Activated CD4-positive, alpha-beta T cell treated with anti-CD3 and anti-CD28 coated beads for 36 hours (primary cell): ENCODE measurements at regions of chr15 and their contacts with region 1.

Region 1: GRCh38 chr15:41116116-41116871 is at the start of gene INO80:
- DNase-seq: peak; percentile 99
- ATAC-seq: peak; percentile 85
- H3K4me3 Mint-ChIP-seq: peak within 1 kb of the TSS; percentile 80
- H3K27ac Mint-ChIP-seq: peak within 1 kb of the TSS; percentile 98
- H3K4me1 Mint-ChIP-seq: peaks cover 24% of the 10 kb centered on the region
- H3K27me3 Mint-ChIP-seq: no peaks in the 10 kb centered on the region
- total RNA-seq, gene INO80: 22.2 to 25.1 TPM

Region 2: DNA sequence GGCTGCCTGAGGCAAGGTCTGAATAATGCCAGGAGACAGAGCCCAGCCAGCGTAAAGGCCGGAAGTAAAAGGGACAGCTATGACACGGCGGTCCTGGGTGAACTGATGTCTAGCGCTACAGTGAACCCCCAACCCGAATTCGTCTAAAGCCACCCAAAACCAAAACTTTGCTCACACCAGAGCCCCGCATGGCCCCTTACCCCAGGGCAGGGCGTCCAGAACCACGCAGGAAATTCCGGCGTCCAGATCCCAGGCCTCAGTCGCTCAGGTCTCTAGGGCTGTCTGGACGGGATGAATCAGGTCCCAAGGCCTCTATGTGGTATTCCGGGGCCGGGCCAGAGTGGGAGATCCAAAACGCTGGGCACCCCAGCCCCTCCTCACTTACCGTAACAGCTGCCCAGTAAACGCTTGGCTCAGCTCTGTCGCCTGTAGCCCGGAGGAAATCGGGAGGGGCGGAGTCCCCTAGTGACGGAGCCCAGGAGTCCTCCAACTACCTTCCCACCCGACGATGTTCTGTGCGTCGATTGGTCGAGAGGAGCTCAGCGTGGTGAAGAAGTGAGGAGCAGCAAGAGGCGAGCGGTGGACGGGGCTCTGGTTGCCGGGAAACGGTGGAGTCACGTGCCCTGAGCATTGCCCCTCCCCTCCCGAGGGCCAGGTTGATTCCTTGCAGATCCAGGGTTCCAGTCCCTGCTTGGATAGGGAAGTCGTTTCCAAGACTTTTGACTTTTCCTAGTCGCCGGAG is 551.5 kb before region 1 on chr15 and contains the start of gene CCDC32:
- CTCF ChIA-PET with region 1: no interaction called
- POLR2A ChIA-PET with region 1: no interaction called
- intact Hi-C with region 1: loop called in 1 of 2 experiments (anchors 1 kb)
- DNase-seq: peak; percentile 97
- ATAC-seq: peak; percentile 97
- H3K4me3 Mint-ChIP-seq: peak within 1 kb of the TSS; percentile 96
- H3K27ac Mint-ChIP-seq: peak within 1 kb of the TSS; percentile 93
- H3K4me1 Mint-ChIP-seq: peaks cover 44% of the 10 kb centered on the region
- H3K27me3 Mint-ChIP-seq: no peaks in the 10 kb centered on the region
- total RNA-seq, gene CCDC32: 14.2 to 24.5 TPM

Region 3: GRCh38 chr15:40807028-40807887 is 309.0 kb before region 1 on chr15 and contains the starts of genes DNAJC17 and ZFYVE19:
- CTCF ChIA-PET with region 1: no interaction called
- POLR2A ChIA-PET with region 1: no interaction called
- intact Hi-C with region 1: loop called (anchors 1 kb)
- DNase-seq: peak; percentile 97
- ATAC-seq: peak; percentile 98
- H3K4me3 Mint-ChIP-seq: peak within 1 kb of the TSS; percentile 91
- H3K27ac Mint-ChIP-seq: peak within 1 kb of the TSS; percentile 96
- H3K4me1 Mint-ChIP-seq: peaks cover 19% of the 10 kb centered on the region
- H3K27me3 Mint-ChIP-seq: no peaks in the 10 kb centered on the region
- total RNA-seq, gene DNAJC17: 41.5 to 43.6 TPM
- total RNA-seq, gene ZFYVE19: 27.5 to 33.7 TPM

Region 4: GRCh38 chr15:41150279-41150678 is 34.0 kb after region 1 on chr15:
- CTCF ChIA-PET with region 1: no interaction called
- POLR2A ChIA-PET with region 1: interaction called, 5 read pairs
- intact Hi-C with region 1: loop called in 1 of 2 experiments (anchors 1 kb)
- DNase-seq: no peak
- ATAC-seq: no peak
- H3K4me3 Mint-ChIP-seq: no peak overlapping the region
- H3K27ac Mint-ChIP-seq: no peak overlapping the region
- H3K4me1 Mint-ChIP-seq: peaks cover 16% of the 10 kb centered on the region
- H3K27me3 Mint-ChIP-seq: no peaks in the 10 kb centered on the region

Region 5: GRCh38 chr15:41401904-41402267 is 285.6 kb after region 1 on chr15:
- CTCF ChIA-PET with region 1: no interaction called
- POLR2A ChIA-PET with region 1: no interaction called
- intact Hi-C with region 1: loop called in 1 of 2 experiments (anchors 1 kb)
- DNase-seq: no peak
- ATAC-seq: no peak
- H3K4me3 Mint-ChIP-seq: peak overlapping the region; percentile 94
- H3K27ac Mint-ChIP-seq: peak overlapping the region; percentile 92
- H3K4me1 Mint-ChIP-seq: peaks cover 13% of the 10 kb centered on the region
- H3K27me3 Mint-ChIP-seq: no peaks in the 10 kb centered on the region

Region 6: GRCh38 chr15:41487381-41487780 is 371.1 kb after region 1 on chr15:
- CTCF ChIA-PET with region 1: no interaction called
- POLR2A ChIA-PET with region 1: no interaction called
- intact Hi-C with region 1: no loop called
- DNase-seq: no peak
- ATAC-seq: no peak
- H3K4me3 Mint-ChIP-seq: no peak overlapping the region
- H3K27ac Mint-ChIP-seq: no peak overlapping the region
- H3K4me1 Mint-ChIP-seq: peaks cover 48% of the 10 kb centered on the region
- H3K27me3 Mint-ChIP-seq: peaks cover 17% of the 10 kb centered on the region

Region 7: DNA sequence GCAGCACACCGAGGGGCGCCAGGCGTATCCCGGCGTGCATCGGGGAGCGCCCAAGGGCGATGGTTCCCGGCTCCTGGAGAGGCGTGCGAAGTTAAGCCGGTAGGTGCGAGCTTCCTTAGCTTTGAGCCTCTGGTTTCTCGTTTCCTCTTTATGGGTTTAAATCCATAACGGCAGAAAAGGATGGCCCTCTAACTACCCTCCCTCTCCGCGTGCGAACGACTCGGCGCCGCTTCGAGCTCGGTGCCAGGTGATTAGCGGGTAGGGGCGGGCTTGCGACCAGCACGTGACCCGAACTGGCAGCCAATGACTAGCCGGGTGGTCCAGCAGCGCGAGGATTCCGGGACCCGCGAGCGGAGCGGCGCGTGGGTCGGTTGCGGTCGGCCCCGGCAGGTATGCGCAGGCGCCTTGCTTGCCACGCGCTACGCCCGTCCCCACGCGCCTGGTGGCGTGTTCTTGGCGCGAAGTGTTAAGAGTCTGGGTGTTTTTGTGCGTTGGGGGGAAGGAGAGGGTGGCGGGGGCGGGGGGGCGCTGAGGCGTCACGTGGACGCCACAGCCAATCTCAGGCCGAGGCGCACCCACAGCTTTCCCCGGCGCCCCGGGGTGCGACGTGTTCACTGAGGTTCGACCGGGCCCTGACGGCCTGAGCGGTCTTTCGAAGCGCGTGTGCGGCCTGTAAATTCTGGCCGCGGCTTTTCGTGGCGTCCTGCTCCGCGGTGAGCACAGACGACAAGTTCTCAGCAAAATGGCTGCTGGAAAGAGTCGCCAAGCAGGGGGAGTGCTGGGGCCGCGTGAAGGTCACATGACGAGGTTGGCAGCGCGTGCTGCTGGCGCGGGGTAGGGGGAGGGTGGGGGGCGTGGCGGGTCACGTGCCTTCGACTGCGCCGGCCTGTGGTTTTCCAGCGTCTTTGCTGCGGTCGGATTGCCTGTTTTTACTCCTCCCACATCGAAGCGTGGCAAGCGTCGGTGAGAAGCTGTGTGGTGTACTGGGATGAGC is 505.2 kb after region 1 on chr15:
- CTCF ChIA-PET with region 1: no interaction called
- POLR2A ChIA-PET with region 1: no interaction called
- intact Hi-C with region 1: loop called in 1 of 2 experiments (anchors 5 kb)
- DNase-seq: peak; percentile 91
- ATAC-seq: peak; percentile 90
- H3K4me3 Mint-ChIP-seq: peak overlapping the region; percentile 70
- H3K27ac Mint-ChIP-seq: peak overlapping the region; percentile 76
- H3K4me1 Mint-ChIP-seq: peaks cover 11% of the 10 kb centered on the region
- H3K27me3 Mint-ChIP-seq: no peaks in the 10 kb centered on the region

Region 8: DNA sequence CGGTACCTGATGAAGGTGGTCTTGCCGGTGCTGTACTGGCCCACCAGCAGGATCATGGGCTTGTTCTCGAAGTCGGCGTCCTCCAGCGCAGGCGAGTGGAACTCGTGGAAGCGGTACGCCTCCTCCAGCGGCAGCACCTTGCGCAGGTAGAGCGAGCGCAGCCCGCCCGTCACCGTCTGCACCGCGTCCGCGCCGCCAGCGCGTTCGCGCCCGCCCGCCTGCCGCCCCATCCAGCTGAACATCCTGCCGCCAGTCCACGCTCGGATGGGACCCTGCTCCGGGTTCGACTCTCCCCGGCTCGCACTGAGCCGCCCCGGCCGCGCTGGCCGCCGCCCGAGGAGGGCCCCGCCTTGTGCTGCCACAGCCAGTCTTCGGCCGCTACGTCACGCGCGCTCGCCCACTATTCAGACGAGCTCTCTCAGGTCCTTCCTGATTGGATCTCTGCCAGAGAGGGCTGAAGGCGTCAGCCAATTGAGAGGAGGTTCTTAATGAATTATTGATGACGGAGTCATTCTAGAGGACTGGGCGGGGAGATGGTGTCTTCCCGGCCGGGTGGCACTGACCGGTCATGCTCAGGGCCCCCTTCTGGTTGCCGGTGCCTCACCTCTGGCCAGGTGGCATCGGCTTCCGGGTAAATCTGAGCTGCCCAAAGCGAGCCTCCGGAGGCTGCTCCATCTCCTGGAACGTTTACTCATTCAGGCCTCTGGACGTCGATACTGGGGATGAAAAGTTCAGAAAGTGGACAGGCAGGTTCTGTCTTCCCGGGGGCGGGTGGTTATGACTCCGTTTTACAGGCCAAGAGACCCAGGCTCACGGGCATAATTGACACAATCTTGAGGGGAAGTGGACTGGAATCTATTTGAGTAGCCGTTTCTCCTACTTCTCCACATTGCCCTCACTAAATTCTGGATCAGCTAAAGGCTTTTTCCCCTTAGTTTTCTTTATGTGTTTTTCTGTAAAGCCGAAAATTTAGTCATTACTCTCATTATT is 856.3 kb after region 1 on chr15 and contains the start of gene EHD4:
- CTCF ChIA-PET with region 1: no interaction called
- POLR2A ChIA-PET with region 1: no interaction called
- intact Hi-C with region 1: loop called in 1 of 2 experiments (anchors 5 kb)
- DNase-seq: peak; percentile 98
- ATAC-seq: peak; percentile 80
- H3K4me3 Mint-ChIP-seq: peak within 1 kb of the TSS; percentile 86
- H3K27ac Mint-ChIP-seq: peak within 1 kb of the TSS; percentile 94
- H3K4me1 Mint-ChIP-seq: peaks cover 53% of the 10 kb centered on the region
- H3K27me3 Mint-ChIP-seq: peaks cover 8% of the 10 kb centered on the region
- total RNA-seq, gene EHD4: 34.7 to 35.7 TPM